HCT116 (cell line): ENCODE measurements at regions of chr17 and their contacts with region 1.

Region 1: DNA sequence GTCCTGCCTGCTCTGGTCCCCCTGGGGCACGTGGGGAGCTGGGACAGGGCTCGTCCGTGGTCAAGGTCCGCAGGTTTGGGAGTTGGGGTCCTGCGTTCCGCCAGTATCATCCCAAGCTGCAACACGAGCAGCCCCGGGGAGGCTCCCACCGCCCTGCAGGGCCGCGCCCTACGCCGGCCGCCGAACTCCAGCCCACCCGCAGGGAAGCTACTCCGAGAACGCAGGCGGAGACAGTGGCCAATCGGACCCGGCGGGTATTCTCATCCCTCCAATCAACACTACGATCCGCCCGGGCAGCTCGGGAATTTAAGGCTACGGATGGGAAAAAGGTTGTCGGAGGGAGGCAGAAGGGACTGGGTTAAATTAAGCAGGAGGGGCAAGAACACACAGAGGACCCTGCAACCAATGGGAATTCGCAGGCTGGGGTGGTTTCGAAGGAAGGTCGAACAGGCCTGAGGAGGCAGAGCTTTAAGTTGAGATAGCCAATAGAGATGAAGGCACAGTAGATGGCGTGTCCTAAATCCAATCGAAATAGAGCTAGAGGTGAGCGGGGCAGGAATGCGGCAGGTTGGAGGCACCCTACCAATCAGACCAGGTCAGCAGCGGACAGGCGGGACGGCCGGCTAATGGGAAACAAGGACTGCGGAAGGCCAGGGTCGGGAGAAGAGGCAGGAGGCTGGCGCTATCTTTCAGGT is 626 bp downstream of the SPAG7 start:
- DNase-seq: peak; percentile 100
- ATAC-seq: peak; percentile 91
- H3K4me3 ChIP-seq: peak overlapping the region; percentile 70 to 79
- H3K27ac ChIP-seq: peak overlapping the region; percentile 96
- H3K4me1 ChIP-seq: peaks cover 19 to 33% of the 10 kb centered on the region in 2 experiments
- H3K27me3 ChIP-seq: no peaks in the 10 kb centered on the region
- CTCF ChIP-seq: no peak
- POLR2A ChIP-seq: no peak
- RAD21 ChIP-seq: no peak

Region 2: GRCh38 chr17:4908301-4908700 is 58.7 kb before region 1 on chr17:
- CTCF ChIA-PET with region 1: interaction called, 7 read pairs
- POLR2A ChIA-PET with region 1: interaction called, 6 read pairs
- RAD21 ChIA-PET with region 1: interaction called in 1 of 2 experiments, 8 read pairs
- intact Hi-C with region 1: loop called (anchors 1 kb)
- DNase-seq: no peak
- ATAC-seq: no peak
- H3K4me3 ChIP-seq: no peak overlapping the region
- H3K27ac ChIP-seq: no peak overlapping the region
- H3K4me1 ChIP-seq: peaks cover 7 to 22% of the 10 kb centered on the region in 2 experiments
- H3K27me3 ChIP-seq: no peaks in the 10 kb centered on the region
- CTCF ChIP-seq: no peak
- POLR2A ChIP-seq: no peak
- RAD21 ChIP-seq: no peak

Region 3: DNA sequence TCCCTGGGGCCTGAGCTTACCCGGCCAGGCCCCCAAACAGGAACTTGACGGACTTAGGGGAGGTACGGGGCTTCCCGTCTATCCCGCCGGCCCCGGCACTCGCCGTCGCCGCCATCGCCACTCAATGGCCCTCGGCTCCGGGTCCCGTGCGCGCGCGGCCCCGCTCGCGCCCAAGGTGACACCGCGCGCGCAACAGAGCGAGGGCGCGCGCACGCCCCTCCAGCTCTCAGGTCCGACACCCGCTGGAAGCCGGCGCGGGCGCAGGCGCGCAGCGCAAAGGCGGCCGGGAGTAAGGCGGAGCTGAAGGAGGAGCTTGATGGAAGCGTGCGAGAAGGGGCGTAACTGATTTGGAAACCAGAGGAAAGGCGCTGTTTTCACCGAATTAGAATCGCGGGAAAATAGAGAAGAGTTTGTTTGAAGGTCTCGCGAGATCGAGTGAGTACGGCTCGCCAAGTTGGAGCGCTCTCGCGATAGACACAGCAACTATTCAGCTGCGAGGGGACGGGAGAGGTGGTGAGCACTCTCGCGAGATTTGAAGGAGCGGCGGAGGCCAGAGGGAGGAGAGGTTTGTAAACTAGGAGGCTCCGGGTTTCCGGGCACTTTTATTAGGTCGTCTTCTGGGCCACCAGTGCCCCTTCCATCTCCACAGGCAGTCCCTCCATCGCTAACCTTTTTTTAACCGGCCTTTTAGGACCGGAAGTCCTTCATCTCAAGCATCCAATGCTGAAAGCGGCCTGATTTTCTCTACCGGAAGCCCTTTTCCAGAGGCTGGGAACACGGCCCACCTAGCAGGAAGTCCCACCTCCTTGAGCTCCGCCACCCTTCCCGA is 27.0 kb before region 1 on chr17 and contains the starts of genes RNF167 and SLC25A11:
- CTCF ChIA-PET with region 1: interaction called, 12 read pairs
- POLR2A ChIA-PET with region 1: interaction called, 45 read pairs
- RAD21 ChIA-PET with region 1: interaction called, 6 to 11 read pairs
- intact Hi-C with region 1: loop called (anchors 1 kb)
- DNase-seq: peak; percentile 100
- ATAC-seq: peak; percentile 85
- H3K4me3 ChIP-seq: peak within 1 kb of the TSS; percentile 86 to 93
- H3K27ac ChIP-seq: peak within 1 kb of the TSS; percentile 95
- H3K4me1 ChIP-seq: peaks cover 10 to 38% of the 10 kb centered on the region in 2 experiments
- H3K27me3 ChIP-seq: no peaks in the 10 kb centered on the region
- CTCF ChIP-seq: no peak
- POLR2A ChIP-seq: peak; percentile 91
- RAD21 ChIP-seq: no peak
- total RNA-seq, gene RNF167: 105 TPM
- total RNA-seq, gene SLC25A11: 75.1 TPM

Region 4: GRCh38 chr17:4948931-4949320 is 18.1 kb before region 1 on chr17:
- CTCF ChIA-PET with region 1: no interaction called
- POLR2A ChIA-PET with region 1: interaction called, 45 read pairs
- RAD21 ChIA-PET with region 1: interaction called in 1 of 2 experiments, 3 read pairs
- intact Hi-C with region 1: loop called (anchors 1 kb)
- DNase-seq: peak; percentile 64
- ATAC-seq: peak; percentile 63
- H3K4me3 ChIP-seq: peak overlapping the region; percentile 96 to 97
- H3K27ac ChIP-seq: peak overlapping the region; percentile 99
- H3K4me1 ChIP-seq: peaks cover 35 to 70% of the 10 kb centered on the region in 2 experiments
- H3K27me3 ChIP-seq: no peaks in the 10 kb centered on the region
- CTCF ChIP-seq: no peak
- POLR2A ChIP-seq: peak; percentile 66
- RAD21 ChIP-seq: no peak

Region 5: GRCh38 chr17:4956493-4957061 is 10.4 kb before region 1 on chr17:
- CTCF ChIA-PET with region 1: interaction called, 7 read pairs
- POLR2A ChIA-PET with region 1: interaction called, 27 read pairs
- RAD21 ChIA-PET with region 1: interaction called in 1 of 2 experiments, 6 read pairs
- intact Hi-C with region 1: no loop called
- DNase-seq: no peak
- ATAC-seq: peak; percentile 67
- H3K4me3 ChIP-seq: no peak overlapping the region
- H3K27ac ChIP-seq: no peak overlapping the region
- H3K4me1 ChIP-seq: peaks cover 7 to 20% of the 10 kb centered on the region in 2 experiments
- H3K27me3 ChIP-seq: no peaks in the 10 kb centered on the region
- CTCF ChIP-seq: peak in 2 of 3 experiments; percentile 34 to 37; a peak in 3 of 6 replicates
- POLR2A ChIP-seq: no peak
- RAD21 ChIP-seq: no peak

Region 6: DNA sequence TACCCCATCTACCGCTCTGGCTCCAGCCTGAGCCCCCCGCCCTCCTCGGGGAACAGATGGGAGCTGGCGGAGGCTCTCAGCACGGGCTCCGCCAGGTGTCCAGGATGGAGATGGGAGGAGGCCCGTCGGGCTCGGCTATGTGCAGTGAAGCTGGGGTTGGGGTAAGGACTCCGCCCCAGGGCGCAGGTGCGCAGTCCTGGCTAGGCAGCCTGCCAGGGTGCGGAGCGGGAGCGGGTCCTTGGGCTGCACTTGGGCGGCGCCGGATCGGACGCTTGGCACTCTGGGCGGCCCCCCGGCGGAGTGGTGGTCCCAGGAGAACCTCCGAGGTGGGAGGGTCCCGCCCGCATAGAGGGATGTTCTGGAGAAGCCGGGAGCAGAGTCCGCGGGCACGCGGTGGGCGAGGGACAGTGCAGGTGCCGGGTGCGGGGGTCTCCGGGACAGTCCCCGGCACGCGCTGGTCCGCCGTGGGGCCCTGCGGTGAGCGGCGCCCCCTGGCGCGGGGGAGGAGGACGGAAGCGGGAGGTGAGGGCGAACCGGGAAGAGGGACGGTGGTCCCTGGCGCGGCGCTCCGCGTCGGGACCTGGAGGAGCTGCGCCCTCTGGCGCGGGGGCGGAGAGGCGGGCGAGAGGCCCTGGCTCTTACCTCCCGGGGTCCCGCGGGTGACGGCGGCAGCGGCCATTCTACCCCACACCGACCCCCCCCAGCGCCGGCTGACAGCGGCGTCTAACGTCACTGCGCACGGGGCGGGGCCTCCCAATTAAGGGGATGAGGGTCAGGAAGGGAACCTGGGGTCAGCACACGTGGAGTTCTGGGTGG is 20.2 kb after region 1 on chr17 and contains the start of gene CAMTA2:
- CTCF ChIA-PET with region 1: interaction called, 9 read pairs
- POLR2A ChIA-PET with region 1: interaction called, 11 read pairs
- RAD21 ChIA-PET with region 1: no interaction called
- intact Hi-C with region 1: loop called (anchors 1 kb)
- DNase-seq: peak; percentile 52
- ATAC-seq: peak; percentile 85
- H3K4me3 ChIP-seq: peak within 1 kb of the TSS; percentile 72 to 97
- H3K27ac ChIP-seq: peak within 1 kb of the TSS; percentile 84
- H3K4me1 ChIP-seq: peaks cover 7 to 24% of the 10 kb centered on the region in 2 experiments
- H3K27me3 ChIP-seq: no peaks in the 10 kb centered on the region
- CTCF ChIP-seq: peak; percentile 66 to 89 (median 73)
- POLR2A ChIP-seq: peak; percentile 82
- RAD21 ChIP-seq: peak; percentile 58
- total RNA-seq, gene CAMTA2: 37.8 TPM